Activated CD8-positive, alpha-beta T cell treated with anti-CD3 and anti-CD28 coated beads for 36 hours (primary cell): ENCODE measurements at regions of chr17 and their contacts with region 1.

Region 1: DNA sequence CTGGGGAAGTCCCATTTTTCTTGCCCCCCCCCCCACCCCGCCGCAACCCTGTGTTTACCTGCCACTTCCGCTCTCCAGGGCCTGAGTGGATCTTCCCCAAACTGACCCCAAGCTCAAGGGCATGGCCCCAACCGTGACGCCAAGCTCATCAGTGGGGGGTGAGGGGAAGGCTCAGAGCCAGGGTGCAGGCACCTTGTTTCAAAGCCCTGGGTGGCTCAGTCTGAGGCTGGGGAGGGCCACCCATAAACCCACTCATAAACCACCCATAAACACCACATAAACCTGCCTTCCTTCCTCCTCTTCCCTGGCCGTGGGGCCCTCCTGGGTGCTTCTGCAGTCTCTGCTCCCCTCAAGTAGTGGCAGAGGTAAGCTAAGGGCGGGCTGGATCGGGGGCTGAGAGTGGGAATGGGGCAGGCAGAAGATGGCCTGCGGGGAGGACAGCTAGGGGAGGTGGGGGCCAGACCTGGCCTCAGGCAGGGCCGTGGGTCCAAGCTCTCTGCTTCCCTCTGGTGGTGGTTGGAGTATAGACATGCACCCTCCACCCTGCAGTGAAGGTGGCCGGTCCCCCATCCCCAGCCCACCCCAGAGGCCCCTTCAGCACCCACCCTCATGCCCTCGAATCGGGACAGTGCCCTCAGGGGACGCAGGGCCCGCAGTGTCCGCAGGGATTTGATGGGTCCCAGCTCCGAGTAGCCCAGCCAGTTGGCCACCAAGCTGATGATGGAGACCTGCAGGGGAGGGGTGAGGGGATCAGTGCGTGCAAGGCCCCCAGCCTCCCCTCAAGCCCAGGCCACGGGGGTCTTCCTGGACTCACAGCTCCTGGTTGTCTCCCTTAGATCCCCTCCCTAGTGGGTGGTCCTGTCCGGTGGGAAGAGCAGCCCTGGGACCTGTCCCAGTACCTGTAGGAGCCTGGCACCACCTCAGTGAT is 14.6 kb upstream of the CD79B start:
- DNase-seq: peak; percentile 74
- ATAC-seq: peak; percentile 92
- H3K4me3 Mint-ChIP-seq: peak overlapping the region; percentile 50
- H3K27ac Mint-ChIP-seq: peak overlapping the region; percentile 77
- H3K4me1 Mint-ChIP-seq: peaks cover 20% of the 10 kb centered on the region
- H3K27me3 Mint-ChIP-seq: no peaks in the 10 kb centered on the region
- CTCF ChIP-seq: peak; percentile 89

Region 2: GRCh38 chr17:63911657-63912426 is 34.9 kb before region 1 on chr17:
- CTCF ChIA-PET with region 1: interaction called, 95 read pairs
- POLR2A ChIA-PET with region 1: interaction called, 3 read pairs
- intact Hi-C with region 1: no loop called
- DNase-seq: peak; percentile 80
- ATAC-seq: peak; percentile 95
- H3K4me3 Mint-ChIP-seq: no peak overlapping the region
- H3K27ac Mint-ChIP-seq: no peak overlapping the region
- H3K4me1 Mint-ChIP-seq: no peaks in the 10 kb centered on the region
- H3K27me3 Mint-ChIP-seq: no peaks in the 10 kb centered on the region
- CTCF ChIP-seq: peak; percentile 88

Region 3: GRCh38 chr17:63931099-63931561 is 15.6 kb before region 1 on chr17:
- CTCF ChIA-PET with region 1: interaction called, 28 read pairs
- POLR2A ChIA-PET with region 1: interaction called, 3 read pairs
- intact Hi-C with region 1: no loop called
- DNase-seq: peak; percentile 80
- ATAC-seq: peak; percentile 71
- H3K4me3 Mint-ChIP-seq: peak overlapping the region; percentile 96
- H3K27ac Mint-ChIP-seq: peak overlapping the region; percentile 91
- H3K4me1 Mint-ChIP-seq: peaks cover 15% of the 10 kb centered on the region
- H3K27me3 Mint-ChIP-seq: no peaks in the 10 kb centered on the region
- CTCF ChIP-seq: no peak

Region 4: DNA sequence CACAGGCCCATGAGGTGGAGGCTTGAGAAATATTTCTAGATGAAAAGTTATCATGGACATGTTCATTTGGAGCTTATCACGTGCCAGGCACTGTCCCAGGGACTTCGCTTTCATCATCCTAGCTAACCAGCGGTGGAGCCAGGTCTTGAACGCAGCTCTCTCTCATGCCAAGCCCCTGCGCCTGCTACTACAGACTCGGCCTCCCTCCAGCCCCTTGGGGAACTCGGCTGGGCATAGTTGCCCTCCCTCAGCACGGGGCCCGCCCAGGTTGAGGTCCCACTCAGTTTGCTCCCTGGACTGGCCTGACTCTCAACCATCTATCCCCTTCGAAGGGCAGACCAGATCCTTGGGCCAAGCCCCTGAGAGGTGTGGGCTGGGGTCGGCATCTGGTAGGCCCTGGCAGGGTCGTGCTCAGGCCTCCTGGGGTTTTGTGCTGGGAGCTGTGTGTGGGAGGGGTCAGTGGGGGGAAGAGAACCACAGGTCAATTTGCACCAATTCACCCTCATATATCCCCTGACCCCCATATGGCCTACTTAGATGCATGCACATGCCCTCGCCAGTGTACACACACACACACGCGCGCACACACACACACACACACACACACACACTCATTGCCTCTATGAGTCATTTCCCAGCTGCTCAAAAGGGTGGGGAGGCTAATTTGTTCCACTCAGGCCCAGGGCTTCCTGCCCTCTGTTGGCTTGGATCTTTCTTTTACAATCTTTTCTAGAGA is 38.1 kb after region 1 on chr17:
- CTCF ChIA-PET with region 1: interaction called, 24 read pairs
- POLR2A ChIA-PET with region 1: no interaction called
- intact Hi-C with region 1: no loop called
- DNase-seq: peak; percentile 92
- ATAC-seq: peak; percentile 97
- H3K4me3 Mint-ChIP-seq: no peak overlapping the region
- H3K27ac Mint-ChIP-seq: peak overlapping the region; percentile 87
- H3K4me1 Mint-ChIP-seq: peaks cover 27% of the 10 kb centered on the region
- H3K27me3 Mint-ChIP-seq: no peaks in the 10 kb centered on the region
- CTCF ChIP-seq: no peak